Activated CD4-positive, alpha-beta T cell treated with anti-CD3 and anti-CD28 coated beads for 36 hours (primary cell): ENCODE measurements at regions of chr9 and their contacts with region 1.

Region 1: GRCh38 chr9:5510360-5510931 is at the start of gene PDCD1LG2:
- DNase-seq: peak; percentile 78
- ATAC-seq: peak; percentile 92
- H3K4me3 Mint-ChIP-seq: peak within 1 kb of the TSS; percentile 64
- H3K27ac Mint-ChIP-seq: peak within 1 kb of the TSS; percentile 89
- H3K4me1 Mint-ChIP-seq: peaks cover 50% of the 10 kb centered on the region
- H3K27me3 Mint-ChIP-seq: no peaks in the 10 kb centered on the region
- total RNA-seq, gene PDCD1LG2: 0.43 to 0.81 TPM

Region 2: GRCh38 chr9:5493679-5494511 is 16.6 kb before region 1 on chr9:
- CTCF ChIA-PET with region 1: interaction called, 8 read pairs
- POLR2A ChIA-PET with region 1: no interaction called
- intact Hi-C with region 1: loop called (anchors 1 to 2 kb)
- DNase-seq: peak; percentile 55
- ATAC-seq: peak; percentile 87
- H3K4me3 Mint-ChIP-seq: no peak overlapping the region
- H3K27ac Mint-ChIP-seq: peak overlapping the region; percentile 82
- H3K4me1 Mint-ChIP-seq: peaks cover 19% of the 10 kb centered on the region
- H3K27me3 Mint-ChIP-seq: peaks cover 2% of the 10 kb centered on the region

Region 3: DNA sequence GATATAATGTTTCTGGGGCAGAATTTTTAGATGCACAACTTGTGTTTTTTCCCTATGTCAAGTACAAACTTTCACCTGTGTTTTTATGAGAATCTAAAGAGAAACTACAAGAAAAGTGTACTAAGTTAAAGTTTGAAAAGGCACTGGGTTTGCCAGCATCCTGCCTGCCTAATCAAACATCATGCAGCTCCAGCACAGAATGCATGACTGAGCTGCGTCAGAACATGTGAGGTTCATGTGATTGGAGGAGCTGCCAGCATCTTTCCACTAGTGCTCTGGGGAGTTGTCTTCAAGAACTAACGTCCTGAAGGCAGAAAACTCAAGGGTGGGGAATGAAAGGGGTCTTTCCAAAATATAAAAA is 72.4 kb after region 1 on chr9:
- CTCF ChIA-PET with region 1: interaction called, 7 read pairs
- POLR2A ChIA-PET with region 1: interaction called, 4 read pairs
- intact Hi-C with region 1: loop called (anchors 1 to 2 kb)
- DNase-seq: peak; percentile 69
- ATAC-seq: peak; percentile 42
- H3K4me3 Mint-ChIP-seq: no peak overlapping the region
- H3K27ac Mint-ChIP-seq: peak overlapping the region; percentile 85
- H3K4me1 Mint-ChIP-seq: peaks cover 74% of the 10 kb centered on the region
- H3K27me3 Mint-ChIP-seq: no peaks in the 10 kb centered on the region